A549 (cell line): ENCODE measurements at regions of chr2 and their contacts with region 1.

Region 1: GRCh38 chr2:208040199-208041171 is 15.2 kb upstream of the PLEKHM3 start:
- DNase-seq: peak; percentile 53 to 78
- ATAC-seq: peak; percentile 90 to 91
- H3K4me3 ChIP-seq: no peak overlapping the region
- H3K27ac ChIP-seq: no peak overlapping the region; a peak in 1 of 6 replicates
- H3K4me1 ChIP-seq: no peaks in the 10 kb centered on the region
- CTCF ChIP-seq: peak; percentile 68
- EP300 ChIP-seq: no peak
- POLR2A ChIP-seq: no peak
- RAD21 ChIP-seq: peak; percentile 58 to 76

Region 2: GRCh38 chr2:207769597-207770486 is 270.6 kb before region 1 on chr2 and contains the start of gene FZD5:
- CTCF ChIA-PET with region 1: interaction called, 57 read pairs
- POLR2A ChIA-PET with region 1: interaction called, 4 read pairs
- DNase-seq: peak; percentile 93 to 97
- ATAC-seq: peak; percentile 82 to 87
- H3K4me3 ChIP-seq: peak within 1 kb of the TSS; percentile 88
- H3K27ac ChIP-seq: peak within 1 kb of the TSS; percentile 94 to 96
- H3K4me1 ChIP-seq: peaks cover 38% of the 10 kb centered on the region
- CTCF ChIP-seq: peak; percentile 64
- EP300 ChIP-seq: no peak; a peak in 1 of 5 replicates
- POLR2A ChIP-seq: peak; percentile 84
- RAD21 ChIP-seq: peak; percentile 67 to 87
- polyA plus RNA-seq, gene FZD5: 6.7 and 7.5 TPM in 2 replicates

Region 3: GRCh38 chr2:207796585-207797350 is 243.7 kb before region 1 on chr2:
- CTCF ChIA-PET with region 1: no interaction called
- POLR2A ChIA-PET with region 1: no interaction called
- DNase-seq: peak in 1 of 2 experiments; percentile 57
- ATAC-seq: peak; percentile 32 to 67; a peak in 4 of 6 replicates
- H3K4me3 ChIP-seq: no peak overlapping the region
- H3K27ac ChIP-seq: peak overlapping the region; percentile 77 to 84
- H3K4me1 ChIP-seq: peaks cover 41% of the 10 kb centered on the region
- CTCF ChIP-seq: no peak
- EP300 ChIP-seq: no peak
- POLR2A ChIP-seq: no peak
- RAD21 ChIP-seq: no peak

Region 4: GRCh38 chr2:207974216-207974605 is 66.3 kb before region 1 on chr2:
- CTCF ChIA-PET with region 1: interaction called, 39 read pairs
- POLR2A ChIA-PET with region 1: no interaction called
- DNase-seq: peak in 1 of 2 experiments; percentile 26
- ATAC-seq: peak; percentile 51 to 59; a peak in 5 of 6 replicates
- H3K4me3 ChIP-seq: no peak overlapping the region
- H3K27ac ChIP-seq: no peak overlapping the region
- H3K4me1 ChIP-seq: peaks cover 24% of the 10 kb centered on the region
- CTCF ChIP-seq: no peak
- EP300 ChIP-seq: no peak
- POLR2A ChIP-seq: no peak
- RAD21 ChIP-seq: no peak

Region 5: GRCh38 chr2:208062113-208062512 is 21.6 kb after region 1 on chr2:
- CTCF ChIA-PET with region 1: interaction called, 12 read pairs
- POLR2A ChIA-PET with region 1: no interaction called
- DNase-seq: peak in 1 of 2 experiments; percentile 65
- ATAC-seq: peak; percentile 84 to 94
- H3K4me3 ChIP-seq: no peak overlapping the region
- H3K27ac ChIP-seq: no peak overlapping the region
- H3K4me1 ChIP-seq: no peaks in the 10 kb centered on the region
- CTCF ChIP-seq: peak; percentile 63
- EP300 ChIP-seq: no peak
- POLR2A ChIP-seq: no peak
- RAD21 ChIP-seq: peak; percentile 71; a peak in 4 of 5 replicates